Activated CD4-positive, alpha-beta T cell treated with anti-CD3 and anti-CD28 coated beads, Interleukin-2, amount 10 ng/mL, durations not matched to agents 7 days and 5 days (primary cell): ENCODE measurements at regions of chr10 and their contacts with region 1.

Region 1: DNA sequence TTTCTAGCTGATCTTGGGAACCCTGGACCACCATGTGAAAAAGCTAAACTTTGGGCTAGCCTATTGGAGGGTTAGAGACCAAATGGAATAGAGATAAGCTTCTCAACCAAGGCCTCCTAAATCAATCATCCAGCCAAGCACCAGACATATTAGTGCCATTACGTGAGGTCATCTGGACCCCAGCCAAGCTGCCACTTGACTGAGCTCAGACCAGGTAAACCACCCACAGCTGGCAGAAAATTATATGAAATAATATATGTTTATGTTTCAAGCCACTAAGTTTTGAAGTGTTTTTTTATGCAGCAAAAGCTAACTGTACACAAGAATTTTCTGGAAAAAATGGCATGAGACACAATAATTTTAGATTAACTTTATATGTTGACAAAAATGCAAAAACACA is 82.6 kb upstream of the PCGF5 start:
- DNase-seq: no peak
- H3K4me3 Mint-ChIP-seq: no peak overlapping the region
- H3K27ac Mint-ChIP-seq: no peak overlapping the region
- H3K4me1 Mint-ChIP-seq: peaks cover 5% of the 10 kb centered on the region
- H3K27me3 Mint-ChIP-seq: no peaks in the 10 kb centered on the region

Region 2: GRCh38 chr10:90526721-90527120 is 611.1 kb before region 1 on chr10:
- CTCF ChIA-PET with region 1: no interaction called
- POLR2A ChIA-PET with region 1: no interaction called
- DNase-seq: no peak
- H3K4me3 Mint-ChIP-seq: no peak overlapping the region
- H3K27ac Mint-ChIP-seq: no peak overlapping the region
- H3K4me1 Mint-ChIP-seq: no peaks in the 10 kb centered on the region
- H3K27me3 Mint-ChIP-seq: no peaks in the 10 kb centered on the region

Region 3: GRCh38 chr10:90960355-90960814 is 177.4 kb before region 1 on chr10:
- CTCF ChIA-PET with region 1: no interaction called
- POLR2A ChIA-PET with region 1: no interaction called
- DNase-seq: no peak
- H3K4me3 Mint-ChIP-seq: no peak overlapping the region
- H3K27ac Mint-ChIP-seq: no peak overlapping the region
- H3K4me1 Mint-ChIP-seq: no peaks in the 10 kb centered on the region
- H3K27me3 Mint-ChIP-seq: no peaks in the 10 kb centered on the region

Region 4: GRCh38 chr10:91123246-91123645 is 14.6 kb before region 1 on chr10:
- CTCF ChIA-PET with region 1: interaction called, 3 read pairs
- POLR2A ChIA-PET with region 1: interaction called, 10 read pairs
- DNase-seq: no peak
- H3K4me3 Mint-ChIP-seq: no peak overlapping the region
- H3K27ac Mint-ChIP-seq: no peak overlapping the region
- H3K4me1 Mint-ChIP-seq: peaks cover 5% of the 10 kb centered on the region
- H3K27me3 Mint-ChIP-seq: peaks cover 12% of the 10 kb centered on the region